ENCODE measurements at regions of chr22 and their contacts with region 1.

Region 1: DNA sequence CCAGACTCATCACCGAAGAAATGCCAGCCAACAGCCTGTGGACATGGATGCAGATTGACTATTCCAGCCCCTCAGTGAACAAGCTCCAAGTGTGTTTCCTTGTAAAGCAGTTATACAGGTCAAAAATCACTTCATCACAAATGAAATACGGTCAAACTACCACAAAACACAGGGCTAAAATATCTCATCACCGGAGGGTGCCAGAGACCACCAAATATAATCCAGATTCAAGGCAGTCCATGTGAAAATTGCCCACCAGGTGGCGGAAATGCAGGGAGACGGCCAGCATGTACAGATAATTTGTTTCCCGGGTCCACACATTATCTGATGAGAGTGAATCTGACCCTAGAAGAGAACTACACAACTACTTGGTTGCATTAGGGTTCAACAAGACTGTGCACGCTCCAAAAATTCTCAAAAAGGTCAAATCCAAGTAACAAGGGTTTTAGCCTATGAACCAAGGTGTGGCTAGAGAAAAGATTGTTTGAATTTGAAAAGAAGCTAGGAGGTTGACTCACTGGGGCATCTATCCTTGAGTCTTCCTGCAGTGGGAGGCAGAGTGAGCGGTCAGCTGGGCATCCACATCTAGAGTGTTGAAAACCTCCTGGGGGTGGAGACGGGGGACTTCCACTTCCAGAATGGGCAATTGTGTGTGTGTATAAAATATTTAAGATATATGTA is 71.7 kb downstream of the IGLL5 start:
- DNase-seq: peak; percentile 85
- H3K4me3 Mint-ChIP-seq: no peak overlapping the region
- H3K27ac Mint-ChIP-seq: no peak overlapping the region
- H3K4me1 Mint-ChIP-seq: no peaks in the 10 kb centered on the region
- H3K27me3 Mint-ChIP-seq: peaks cover 33% of the 10 kb centered on the region
- CTCF ChIP-seq: peak; percentile 96

Region 2: GRCh38 chr22:22587577-22588188 is 371.6 kb before region 1 on chr22:
- CTCF ChIA-PET with region 1: interaction called, 73 read pairs
- POLR2A ChIA-PET with region 1: no interaction called
- intact Hi-C with region 1: loop called (anchors 10 kb)
- DNase-seq: no peak
- H3K4me3 Mint-ChIP-seq: no peak overlapping the region
- H3K27ac Mint-ChIP-seq: no peak overlapping the region
- H3K4me1 Mint-ChIP-seq: no peaks in the 10 kb centered on the region
- H3K27me3 Mint-ChIP-seq: peaks cover 87% of the 10 kb centered on the region
- CTCF ChIP-seq: no peak

Region 3: GRCh38 chr22:22770280-22770871 is 188.9 kb before region 1 on chr22:
- CTCF ChIA-PET with region 1: interaction called, 14 read pairs
- POLR2A ChIA-PET with region 1: no interaction called
- intact Hi-C with region 1: no loop called
- DNase-seq: peak; percentile 69
- H3K4me3 Mint-ChIP-seq: no peak overlapping the region
- H3K27ac Mint-ChIP-seq: no peak overlapping the region
- H3K4me1 Mint-ChIP-seq: no peaks in the 10 kb centered on the region
- H3K27me3 Mint-ChIP-seq: peaks cover 96% of the 10 kb centered on the region
- CTCF ChIP-seq: peak; percentile 86

Region 4: DNA sequence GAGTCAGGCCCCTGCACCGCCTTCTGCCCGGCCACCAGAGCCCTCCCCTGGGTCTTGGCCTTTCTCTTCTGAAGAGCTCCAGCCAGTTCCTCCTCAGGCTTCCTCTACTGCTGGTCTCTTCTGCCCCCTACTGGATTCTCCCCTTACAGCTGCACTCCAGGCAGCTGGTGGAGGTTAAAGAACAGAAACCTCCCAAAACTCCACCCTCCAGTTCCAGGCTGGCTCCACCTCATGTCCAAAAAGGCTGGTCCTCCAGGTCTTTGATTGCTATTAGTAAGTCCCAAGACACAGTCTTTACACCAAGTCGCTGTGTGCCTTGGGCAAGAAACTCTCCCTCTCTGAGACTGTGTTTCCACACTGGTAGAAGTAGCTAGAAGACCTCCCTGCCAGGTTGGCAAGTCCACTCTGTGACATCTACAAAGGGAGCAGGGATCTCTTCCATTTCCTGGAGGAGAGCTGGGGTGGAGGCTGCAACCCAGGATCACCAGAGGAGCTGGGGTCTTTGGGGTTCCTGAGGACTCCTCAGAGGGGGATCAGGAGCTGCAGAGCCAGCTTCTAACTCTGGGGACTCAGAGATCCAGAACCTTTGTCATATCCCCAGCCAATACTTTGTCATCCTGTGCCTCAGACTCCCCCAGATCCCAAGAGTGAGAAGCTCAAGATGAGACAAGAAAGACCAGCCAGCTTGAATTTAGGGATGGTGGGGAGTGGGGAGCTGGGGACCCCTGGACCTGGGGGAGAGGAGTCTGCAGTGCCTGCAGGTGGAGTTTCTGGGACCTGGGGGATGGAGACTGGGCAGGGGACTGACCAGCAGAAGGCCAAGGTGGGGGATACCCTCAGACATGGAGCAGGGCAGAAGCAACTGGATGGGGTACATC is 75.0 kb before region 1 on chr22:
- CTCF ChIA-PET with region 1: interaction called, 10 read pairs
- POLR2A ChIA-PET with region 1: no interaction called
- intact Hi-C with region 1: no loop called
- DNase-seq: peak; percentile 74
- H3K4me3 Mint-ChIP-seq: no peak overlapping the region
- H3K27ac Mint-ChIP-seq: no peak overlapping the region
- H3K4me1 Mint-ChIP-seq: no peaks in the 10 kb centered on the region
- H3K27me3 Mint-ChIP-seq: peaks cover 52% of the 10 kb centered on the region
- CTCF ChIP-seq: peak; percentile 62

Region 5: GRCh38 chr22:22988150-22988549 is 28.9 kb after region 1 on chr22:
- CTCF ChIA-PET with region 1: no interaction called
- POLR2A ChIA-PET with region 1: no interaction called
- intact Hi-C with region 1: no loop called
- DNase-seq: no peak
- H3K4me3 Mint-ChIP-seq: no peak overlapping the region
- H3K27ac Mint-ChIP-seq: no peak overlapping the region
- H3K4me1 Mint-ChIP-seq: no peaks in the 10 kb centered on the region
- H3K27me3 Mint-ChIP-seq: peaks cover 50% of the 10 kb centered on the region
- CTCF ChIP-seq: no peak

Region 6: GRCh38 chr22:23119494-23120414 is 160.5 kb after region 1 on chr22:
- CTCF ChIA-PET with region 1: interaction called, 61 read pairs
- POLR2A ChIA-PET with region 1: no interaction called
- intact Hi-C with region 1: no loop called
- DNase-seq: no peak
- H3K4me3 Mint-ChIP-seq: no peak overlapping the region
- H3K27ac Mint-ChIP-seq: no peak overlapping the region
- H3K4me1 Mint-ChIP-seq: no peaks in the 10 kb centered on the region
- H3K27me3 Mint-ChIP-seq: peaks cover 17% of the 10 kb centered on the region
- CTCF ChIP-seq: no peak

Region 7: GRCh38 chr22:23144932-23145873 is 185.9 kb after region 1 on chr22 and contains the start of gene RAB36:
- CTCF ChIA-PET with region 1: interaction called, 45 read pairs
- POLR2A ChIA-PET with region 1: no interaction called
- intact Hi-C with region 1: no loop called
- DNase-seq: peak; percentile 99
- H3K4me3 Mint-ChIP-seq: peak within 1 kb of the TSS; percentile 78
- H3K27ac Mint-ChIP-seq: peak within 1 kb of the TSS; percentile 72
- H3K4me1 Mint-ChIP-seq: peaks cover 9% of the 10 kb centered on the region
- H3K27me3 Mint-ChIP-seq: no peaks in the 10 kb centered on the region
- CTCF ChIP-seq: no peak
- total RNA-seq, gene RAB36: 8.5 and 8.8 TPM in 2 replicates

Region 8: DNA sequence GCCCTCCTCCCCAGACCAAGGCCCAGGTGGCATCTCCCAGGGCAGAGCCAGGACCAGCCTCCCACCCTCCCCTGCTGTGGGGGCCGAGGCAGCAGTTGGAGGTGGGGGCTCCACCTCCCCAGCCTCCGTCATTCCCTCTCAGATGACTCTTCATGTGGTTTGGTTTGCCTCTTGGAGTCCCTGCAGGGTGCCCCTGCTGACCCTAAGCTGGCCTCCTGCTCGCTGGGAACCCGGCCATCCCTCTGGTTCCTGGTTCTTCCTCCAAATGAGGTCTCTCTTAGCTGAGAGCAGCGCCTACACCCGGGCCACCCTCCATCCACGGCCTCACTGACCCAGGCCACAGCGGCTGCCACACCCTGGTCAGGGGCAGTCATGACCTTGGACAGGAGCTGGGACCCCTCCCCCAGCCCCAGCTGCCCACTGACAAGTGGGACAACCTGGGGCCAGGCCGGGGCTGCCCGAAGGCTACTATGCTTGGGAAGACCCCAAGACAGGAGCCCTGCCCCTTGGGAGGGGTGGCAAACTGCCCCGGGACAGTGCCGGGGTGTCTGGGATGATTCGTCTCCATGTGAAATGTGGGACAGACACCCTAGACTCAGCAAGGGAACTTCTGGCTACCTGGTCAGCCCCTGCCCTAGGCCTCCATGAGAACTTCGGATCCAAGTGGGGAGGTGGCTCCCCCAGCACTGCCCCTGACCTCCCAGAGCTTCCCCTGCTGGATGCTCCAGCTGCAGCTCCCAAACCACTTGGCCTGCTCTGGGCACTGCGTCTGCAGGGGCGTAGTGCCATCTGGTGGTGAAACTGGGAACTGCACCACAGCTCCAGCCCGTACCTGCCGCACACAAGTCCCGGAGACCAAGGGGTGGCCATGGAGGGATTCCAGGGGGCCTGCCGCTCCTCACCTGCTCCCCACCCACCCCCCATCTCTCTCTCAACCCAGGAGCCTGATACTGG is 426.3 kb after region 1 on chr22:
- CTCF ChIA-PET with region 1: interaction called, 48 read pairs
- POLR2A ChIA-PET with region 1: no interaction called
- intact Hi-C with region 1: loop called (anchors 1 kb)
- DNase-seq: peak; percentile 64
- H3K4me3 Mint-ChIP-seq: no peak overlapping the region
- H3K27ac Mint-ChIP-seq: no peak overlapping the region
- H3K4me1 Mint-ChIP-seq: no peaks in the 10 kb centered on the region
- H3K27me3 Mint-ChIP-seq: peaks cover 10% of the 10 kb centered on the region
- CTCF ChIP-seq: peak; percentile 98